ENCODE measurements at regions of chr2 and their contacts with region 1.

Region 1: DNA sequence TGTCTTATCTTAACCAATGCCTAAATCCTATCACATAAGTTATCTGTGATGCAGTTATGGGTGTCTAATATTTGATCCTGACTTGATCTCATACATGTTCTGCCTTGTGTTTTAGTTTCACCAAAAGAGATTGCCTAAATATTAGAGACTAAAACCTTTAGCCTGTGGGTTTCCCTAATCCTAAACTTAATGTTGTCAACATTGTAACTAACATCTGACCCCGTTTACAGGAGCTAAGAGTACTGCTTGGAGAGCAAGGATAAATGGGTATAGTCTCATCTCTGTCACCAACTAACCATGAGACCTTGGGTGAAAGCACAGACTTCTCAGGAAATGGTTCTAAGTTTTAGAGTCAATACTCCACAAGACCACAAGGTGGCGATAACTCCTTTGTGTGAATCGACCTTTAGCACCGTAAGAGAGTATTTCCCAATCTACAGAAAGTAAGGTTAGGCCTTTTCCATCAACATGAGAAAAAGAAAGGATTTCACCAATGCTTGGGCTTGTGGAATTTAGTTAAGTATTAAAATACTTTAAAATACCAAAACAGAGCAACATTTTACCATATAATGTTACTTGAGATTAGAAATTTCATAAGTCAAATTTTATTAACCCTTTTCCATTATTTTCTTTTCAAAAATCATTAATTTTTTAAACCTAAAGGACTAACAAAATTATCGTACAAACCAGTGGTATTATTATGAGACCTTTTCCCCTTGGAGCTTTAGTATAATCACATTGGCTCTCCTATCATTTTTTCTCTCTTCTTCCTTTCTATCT is 60.5 kb downstream of the G6PC2 start:
- DNase-seq: no peak
- ATAC-seq: peak; percentile 56 to 76
- H3K4me3 ChIP-seq: no peak overlapping the region
- H3K27ac ChIP-seq: no peak overlapping the region
- H3K4me1 ChIP-seq: no peaks in the 10 kb centered on the region
- H3K27me3 ChIP-seq: no peaks in the 10 kb centered on the region
- CTCF ChIP-seq: peak; percentile 41 to 77 (median 64)
- POLR2A ChIP-seq: no peak

Region 2: GRCh38 chr2:168976034-168976654 is 14.5 kb after region 1 on chr2:
- in situ Hi-C with region 1: no loop called
- intact Hi-C with region 1: loop called (anchors 1 kb)
- DNase-seq: no peak
- ATAC-seq: no peak
- H3K4me3 ChIP-seq: no peak overlapping the region
- H3K27ac ChIP-seq: no peak overlapping the region
- H3K4me1 ChIP-seq: peaks cover 0 to under 1% of the 10 kb centered on the region in 2 donors
- H3K27me3 ChIP-seq: no peaks in the 10 kb centered on the region
- CTCF ChIP-seq: no peak
- POLR2A ChIP-seq: no peak

Region 3: GRCh38 chr2:169131587-169132512 is 170.2 kb after region 1 on chr2:
- in situ Hi-C with region 1: loop called in 2 of 4 experiments (anchors 10 to 25 kb)
- intact Hi-C with region 1: loop called (anchors 2 kb)
- DNase-seq: no peak
- ATAC-seq: peak; percentile 39 to 46
- H3K4me3 ChIP-seq: no peak overlapping the region
- H3K27ac ChIP-seq: no peak overlapping the region
- H3K4me1 ChIP-seq: no peaks in the 10 kb centered on the region
- H3K27me3 ChIP-seq: no peaks in the 10 kb centered on the region
- CTCF ChIP-seq: peak in 4 of 5 experiments; percentile 61 to 78 (median 70)
- POLR2A ChIP-seq: no peak

Region 4: DNA sequence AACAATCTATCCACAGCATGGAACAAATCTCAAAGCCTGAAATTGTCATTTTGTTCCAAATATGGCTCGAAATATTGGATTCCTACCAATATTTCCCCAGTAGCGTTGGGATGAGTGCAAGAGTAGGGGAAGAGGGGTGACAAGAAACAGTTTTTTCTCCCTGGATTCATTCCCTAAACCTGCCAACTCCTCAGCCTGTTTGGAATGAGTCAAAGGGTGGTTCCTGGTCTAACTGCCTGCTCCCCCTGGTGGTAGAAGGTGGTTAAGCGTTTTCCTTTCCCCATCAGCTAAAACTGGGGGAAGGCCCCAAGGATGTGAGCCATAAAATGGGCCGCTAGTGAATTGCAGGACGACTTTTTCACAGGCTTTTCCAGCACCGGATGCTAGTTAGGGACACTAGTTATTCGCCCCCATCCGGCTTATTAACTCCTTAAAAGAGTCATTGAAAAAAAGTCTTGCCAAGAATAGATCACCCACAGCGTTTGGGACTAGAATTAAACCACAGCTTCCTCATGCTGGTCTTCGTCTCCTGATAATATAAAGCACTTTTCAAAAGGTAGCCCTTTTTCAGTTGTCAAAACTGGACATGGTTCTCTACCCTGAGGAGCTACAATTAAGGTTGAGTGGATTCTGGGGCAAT is 180.2 kb after region 1 on chr2:
- in situ Hi-C with region 1: loop called in 2 of 4 experiments (anchors 10 to 25 kb)
- intact Hi-C with region 1: no loop called
- DNase-seq: no peak
- ATAC-seq: no peak
- H3K4me3 ChIP-seq: no peak overlapping the region
- H3K27ac ChIP-seq: no peak overlapping the region
- H3K4me1 ChIP-seq: no peaks in the 10 kb centered on the region
- H3K27me3 ChIP-seq: no peaks in the 10 kb centered on the region
- CTCF ChIP-seq: peak in 3 of 5 experiments; percentile 41 to 60 (median 56)
- POLR2A ChIP-seq: no peak

Measured in gastrocnemius medialis (tissue), 4 donors.